B cell (primary cell): ENCODE measurements at regions of chr11 and their contacts with region 1.

Region 1: DNA sequence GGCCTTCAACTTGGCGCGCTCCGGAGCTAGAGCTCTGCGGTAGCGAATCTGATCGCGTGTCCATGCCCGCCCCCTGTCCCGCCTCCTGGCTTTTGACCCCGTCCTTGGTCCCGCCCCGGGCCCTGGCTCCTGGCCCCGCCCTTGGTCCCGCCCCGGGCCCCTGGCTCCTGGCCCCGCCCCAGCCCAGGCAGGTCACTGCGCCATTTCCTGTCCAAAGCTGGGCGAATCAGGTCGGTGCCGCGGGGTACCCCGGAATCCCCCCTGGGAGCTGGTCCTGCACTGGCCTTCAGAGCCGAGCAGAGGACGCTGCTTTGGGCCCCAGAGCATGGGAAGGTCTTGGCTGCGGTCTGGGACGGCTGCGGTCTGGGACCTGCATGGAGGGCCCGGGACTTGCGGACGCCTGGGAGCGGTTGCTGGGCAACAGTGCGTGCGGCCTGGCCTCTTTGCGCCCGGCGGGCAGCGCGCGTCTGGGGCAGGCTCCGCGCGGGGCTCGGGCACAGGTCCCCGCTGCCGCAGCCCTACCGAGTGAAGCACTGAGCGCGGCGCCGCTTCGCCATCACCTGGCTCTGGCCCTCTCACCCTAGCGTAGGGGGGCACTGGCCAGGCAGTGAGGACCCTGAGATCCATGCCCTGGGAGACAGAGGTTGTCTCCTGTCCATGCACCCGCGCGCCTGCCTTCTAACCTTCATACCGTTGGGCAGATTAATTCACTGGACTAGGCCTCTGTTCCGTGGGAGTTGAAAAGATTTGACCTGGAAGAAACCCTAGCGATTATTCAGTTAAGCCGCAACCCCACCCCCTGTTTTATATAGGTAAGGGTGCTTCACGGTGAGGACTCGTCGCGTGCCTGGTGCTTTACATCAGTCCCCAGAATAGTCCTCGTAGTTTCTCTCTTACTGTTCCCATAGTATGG is at the start of gene TTC12:
- DNase-seq: peak; percentile 94
- ATAC-seq: peak; percentile 99
- H3K4me3 ChIP-seq: peak within 1 kb of the TSS; percentile 53 to 89 (median 67)
- H3K4me3 Mint-ChIP-seq: peak within 1 kb of the TSS; percentile 82
- H3K27ac ChIP-seq: peak within 1 kb of the TSS; percentile 80 to 94
- H3K27ac Mint-ChIP-seq: peak within 1 kb of the TSS; percentile 87
- H3K4me1 ChIP-seq: peaks cover 15 to 20% of the 10 kb centered on the region in 2 donors
- H3K4me1 Mint-ChIP-seq: peaks cover 24% of the 10 kb centered on the region
- H3K27me3 ChIP-seq: no peaks in the 10 kb centered on the region
- H3K27me3 Mint-ChIP-seq: no peaks in the 10 kb centered on the region
- CTCF ChIP-seq: no peak
- total RNA-seq, gene TTC12: 47.3 and 63.8 TPM in 2 replicates

Region 2: DNA sequence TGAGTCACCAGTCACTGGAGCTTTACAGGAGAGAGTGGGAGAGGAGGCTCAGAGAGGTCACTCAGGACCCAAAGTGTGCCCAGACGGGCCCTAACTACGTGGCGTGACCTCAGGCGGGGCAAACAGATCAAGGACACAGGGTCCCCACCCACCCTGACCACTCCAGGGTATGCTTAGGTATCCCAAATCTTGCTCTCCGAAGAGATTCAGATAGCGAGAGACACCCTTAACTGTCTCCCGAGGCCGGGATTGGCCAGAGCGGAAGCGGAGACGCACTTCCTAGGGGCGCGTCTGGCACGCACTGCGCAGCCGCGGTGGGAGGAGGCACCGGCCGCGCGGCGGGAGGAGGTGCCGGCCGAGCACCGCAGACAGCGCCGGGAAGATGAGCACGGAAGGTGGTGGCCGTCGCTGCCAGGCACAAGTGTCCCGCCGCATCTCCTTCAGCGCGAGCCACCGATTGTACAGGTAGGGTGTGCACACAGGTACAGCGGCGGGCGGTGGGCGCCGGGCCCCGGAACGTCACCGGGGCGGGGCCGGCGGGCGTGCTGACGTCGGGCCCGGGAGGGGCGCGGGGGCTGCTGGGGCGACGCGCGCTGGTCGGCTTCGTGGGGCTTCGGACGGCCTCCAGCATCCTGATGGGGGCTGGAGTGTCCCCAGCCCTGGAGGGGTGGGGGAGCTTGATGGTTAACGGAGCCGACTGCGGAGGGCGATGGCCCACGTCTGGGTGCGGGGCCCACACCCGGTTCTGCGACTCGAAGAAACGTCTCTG is 1088.4 kb before region 1 on chr11 and contains the start of gene PTS:
- CTCF ChIA-PET with region 1: no interaction called
- POLR2A ChIA-PET with region 1: no interaction called
- intact Hi-C with region 1: loop called (anchors 1 kb)
- DNase-seq: peak; percentile 94
- ATAC-seq: peak; percentile 90
- H3K4me3 ChIP-seq: peak within 1 kb of the TSS; percentile 82 to 98 (median 92)
- H3K4me3 Mint-ChIP-seq: peak within 1 kb of the TSS; percentile 95
- H3K27ac ChIP-seq: peak within 1 kb of the TSS; percentile 99
- H3K27ac Mint-ChIP-seq: peak within 1 kb of the TSS; percentile 99
- H3K4me1 ChIP-seq: peaks cover 10 to 18% of the 10 kb centered on the region in 2 donors
- H3K4me1 Mint-ChIP-seq: peaks cover 23% of the 10 kb centered on the region
- H3K27me3 ChIP-seq: no peaks in the 10 kb centered on the region
- H3K27me3 Mint-ChIP-seq: no peaks in the 10 kb centered on the region
- CTCF ChIP-seq: no peak
- total RNA-seq, gene PTS: 36.2 and 36.7 TPM in 2 replicates

Region 3: DNA sequence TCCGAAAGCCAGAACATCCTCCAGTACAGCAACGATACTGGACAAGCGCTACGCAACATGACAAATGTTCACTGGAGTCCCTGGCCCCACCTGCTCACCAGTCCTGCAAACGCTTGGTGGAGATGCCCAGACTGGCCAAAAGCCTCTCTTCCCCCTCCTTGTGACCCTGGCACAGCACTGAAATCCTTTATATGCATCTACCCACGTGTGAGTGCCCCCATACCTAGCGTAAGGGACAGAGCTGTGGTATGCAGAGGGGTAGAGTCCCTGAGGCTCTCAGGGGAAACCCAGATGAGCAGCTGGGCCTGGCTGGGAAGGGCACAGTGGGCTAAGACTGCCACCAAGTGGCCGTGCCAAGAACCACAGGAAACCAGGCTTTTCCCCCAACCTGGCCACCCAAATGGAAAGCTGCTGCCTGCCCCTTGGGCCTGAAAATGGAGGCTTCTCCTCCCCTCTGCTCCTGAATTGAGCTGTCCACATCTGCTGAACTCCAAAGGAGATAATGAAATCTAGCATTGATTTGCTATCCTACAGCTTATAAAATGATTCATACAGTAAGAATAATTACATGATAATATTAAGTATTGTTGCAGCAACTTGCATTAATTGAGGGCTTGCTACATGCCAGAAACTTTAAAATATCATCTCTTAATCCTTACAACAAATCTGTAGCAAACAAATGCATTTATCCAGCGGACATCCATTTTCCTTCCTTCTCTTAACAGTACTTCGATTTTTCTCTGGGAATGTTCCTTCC is 25.0 kb before region 1 on chr11:
- CTCF ChIA-PET with region 1: interaction called, 10 read pairs
- POLR2A ChIA-PET with region 1: no interaction called
- intact Hi-C with region 1: loop called (anchors 1 kb)
- DNase-seq: peak; percentile 78
- ATAC-seq: peak; percentile 98
- H3K4me3 ChIP-seq: no peak overlapping the region
- H3K4me3 Mint-ChIP-seq: no peak overlapping the region
- H3K27ac ChIP-seq: no peak overlapping the region
- H3K27ac Mint-ChIP-seq: no peak overlapping the region
- H3K4me1 ChIP-seq: peaks cover 0 to 5% of the 10 kb centered on the region in 2 donors
- H3K4me1 Mint-ChIP-seq: peaks cover 4% of the 10 kb centered on the region
- H3K27me3 ChIP-seq: peaks cover 0 to 8% (median 0%) of the 10 kb centered on the region in 4 experiments
- H3K27me3 Mint-ChIP-seq: peaks cover 22% of the 10 kb centered on the region
- CTCF ChIP-seq: peak; percentile 87

Region 4: GRCh38 chr11:113345978-113346377 is 31.3 kb after region 1 on chr11:
- CTCF ChIA-PET with region 1: no interaction called
- POLR2A ChIA-PET with region 1: no interaction called
- intact Hi-C with region 1: no loop called
- DNase-seq: no peak
- ATAC-seq: no peak
- H3K4me3 ChIP-seq: no peak overlapping the region
- H3K4me3 Mint-ChIP-seq: no peak overlapping the region
- H3K27ac ChIP-seq: no peak overlapping the region
- H3K27ac Mint-ChIP-seq: no peak overlapping the region
- H3K4me1 ChIP-seq: no peaks in the 10 kb centered on the region
- H3K4me1 Mint-ChIP-seq: no peaks in the 10 kb centered on the region
- H3K27me3 ChIP-seq: no peaks in the 10 kb centered on the region
- H3K27me3 Mint-ChIP-seq: no peaks in the 10 kb centered on the region
- CTCF ChIP-seq: no peak

Region 5: DNA sequence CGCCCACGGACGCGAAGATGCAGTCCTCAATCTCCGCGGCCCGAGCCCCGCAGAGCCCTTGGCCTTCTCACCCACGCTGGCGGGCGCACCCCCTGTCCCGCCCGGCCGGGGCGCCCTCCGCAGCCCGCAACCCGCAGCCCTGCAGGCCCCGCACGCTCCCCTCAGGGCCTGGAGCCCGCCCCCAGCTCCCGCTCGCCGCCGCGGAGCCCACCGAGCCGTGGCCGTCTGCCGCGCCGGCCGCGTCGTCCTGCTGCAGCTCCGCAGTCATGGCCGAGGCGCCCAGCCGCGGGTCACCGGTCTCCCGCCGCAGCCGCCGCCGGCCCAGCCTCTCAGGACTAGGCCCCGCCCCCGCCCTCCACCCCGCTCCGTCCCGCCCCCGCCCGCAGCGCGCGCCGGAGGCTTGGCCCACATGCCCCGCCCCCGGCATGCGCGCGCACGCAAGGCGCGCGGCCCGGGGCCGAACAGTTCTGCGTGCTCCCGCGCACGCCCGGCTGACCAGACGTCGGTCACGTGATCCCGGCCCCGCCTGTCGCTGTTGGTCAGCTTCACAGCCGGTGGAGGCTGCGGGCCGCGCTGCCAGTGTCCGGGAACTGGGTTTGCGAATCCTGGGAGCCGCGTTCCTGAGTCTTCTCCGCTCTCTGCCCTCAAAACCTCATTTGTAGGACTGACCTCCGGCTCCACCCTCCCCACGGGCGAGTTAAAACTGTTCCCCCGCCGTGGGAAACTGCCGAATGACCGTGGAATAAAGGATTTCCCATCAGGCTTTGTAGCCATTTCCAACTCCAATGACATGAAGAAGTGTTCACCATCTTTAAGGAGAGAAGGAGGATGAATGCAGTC is 560.8 kb after region 1 on chr11 and contains the start of gene USP28:
- CTCF ChIA-PET with region 1: no interaction called
- POLR2A ChIA-PET with region 1: no interaction called
- intact Hi-C with region 1: loop called (anchors 10 kb)
- DNase-seq: peak; percentile 92
- ATAC-seq: peak; percentile 90
- H3K4me3 ChIP-seq: peak within 1 kb of the TSS; percentile 61 to 90 (median 80)
- H3K4me3 Mint-ChIP-seq: peak within 1 kb of the TSS; percentile 98
- H3K27ac ChIP-seq: peak within 1 kb of the TSS; percentile 78 to 87
- H3K27ac Mint-ChIP-seq: peak within 1 kb of the TSS; percentile 98
- H3K4me1 ChIP-seq: peaks cover 33 to 51% of the 10 kb centered on the region in 2 donors
- H3K4me1 Mint-ChIP-seq: peaks cover 59% of the 10 kb centered on the region
- H3K27me3 ChIP-seq: no peaks in the 10 kb centered on the region
- H3K27me3 Mint-ChIP-seq: no peaks in the 10 kb centered on the region
- CTCF ChIP-seq: peak; percentile 25
- total RNA-seq, gene USP28: 104 and 112 TPM in 2 replicates

Region 6: GRCh38 chr11:114384487-114384886 is 1069.8 kb after region 1 on chr11:
- CTCF ChIA-PET with region 1: no interaction called
- POLR2A ChIA-PET with region 1: no interaction called
- intact Hi-C with region 1: no loop called
- DNase-seq: no peak
- ATAC-seq: no peak
- H3K4me3 ChIP-seq: no peak overlapping the region
- H3K4me3 Mint-ChIP-seq: no peak overlapping the region
- H3K27ac ChIP-seq: no peak overlapping the region
- H3K27ac Mint-ChIP-seq: no peak overlapping the region
- H3K4me1 ChIP-seq: no peaks in the 10 kb centered on the region
- H3K4me1 Mint-ChIP-seq: no peaks in the 10 kb centered on the region
- H3K27me3 ChIP-seq: peaks cover 0 to 11% (median 4%) of the 10 kb centered on the region in 4 experiments
- H3K27me3 Mint-ChIP-seq: peaks cover 46% of the 10 kb centered on the region
- CTCF ChIP-seq: no peak

Region 7: GRCh38 chr11:114400217-114400914 is 1085.7 kb after region 1 on chr11 and contains the starts of genes C11orf71 and RBM7:
- CTCF ChIA-PET with region 1: no interaction called
- POLR2A ChIA-PET with region 1: no interaction called
- intact Hi-C with region 1: loop called (anchors 2 kb)
- DNase-seq: peak; percentile 99
- ATAC-seq: peak; percentile 94
- H3K4me3 ChIP-seq: peak within 1 kb of the TSS; percentile 72 to 98 (median 89)
- H3K4me3 Mint-ChIP-seq: peak within 1 kb of the TSS; percentile 99
- H3K27ac ChIP-seq: peak within 1 kb of the TSS; percentile 87 to 92
- H3K27ac Mint-ChIP-seq: peak within 1 kb of the TSS; percentile 98
- H3K4me1 ChIP-seq: peaks cover 21 to 28% of the 10 kb centered on the region in 2 donors
- H3K4me1 Mint-ChIP-seq: peaks cover 45% of the 10 kb centered on the region
- H3K27me3 ChIP-seq: no peaks in the 10 kb centered on the region
- H3K27me3 Mint-ChIP-seq: no peaks in the 10 kb centered on the region
- CTCF ChIP-seq: no peak
- total RNA-seq, gene C11orf71: 14.8 and 14.9 TPM in 2 replicates
- total RNA-seq, gene RBM7: 34.8 and 36.1 TPM in 2 replicates